Head of caudate nucleus (tissue), 42 donors: ENCODE measurements at regions of chr15 and their contacts with region 1.

Region 1: DNA sequence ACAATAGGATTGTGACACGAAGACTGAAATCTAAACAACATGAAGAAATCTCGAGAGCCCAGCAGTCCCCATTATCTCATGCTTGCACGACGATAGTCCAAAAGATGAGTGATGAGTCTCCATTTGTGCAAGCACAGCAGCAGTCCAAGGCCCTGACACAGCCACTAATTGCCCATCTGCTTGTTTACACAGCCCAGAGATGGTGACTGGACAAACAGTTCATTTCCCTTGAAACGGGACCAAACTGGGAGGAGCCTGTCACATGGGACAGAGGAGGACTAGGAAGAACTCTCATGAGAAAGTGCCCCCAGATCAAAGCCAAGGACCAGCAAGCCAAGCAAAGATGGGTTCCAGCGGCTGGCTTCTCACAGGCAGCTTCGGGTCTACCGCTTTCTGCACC is 121.0 kb downstream of the GREM1 start:
- DNase-seq: peak; percentile 38 to 93 (median 78)

Region 2: DNA sequence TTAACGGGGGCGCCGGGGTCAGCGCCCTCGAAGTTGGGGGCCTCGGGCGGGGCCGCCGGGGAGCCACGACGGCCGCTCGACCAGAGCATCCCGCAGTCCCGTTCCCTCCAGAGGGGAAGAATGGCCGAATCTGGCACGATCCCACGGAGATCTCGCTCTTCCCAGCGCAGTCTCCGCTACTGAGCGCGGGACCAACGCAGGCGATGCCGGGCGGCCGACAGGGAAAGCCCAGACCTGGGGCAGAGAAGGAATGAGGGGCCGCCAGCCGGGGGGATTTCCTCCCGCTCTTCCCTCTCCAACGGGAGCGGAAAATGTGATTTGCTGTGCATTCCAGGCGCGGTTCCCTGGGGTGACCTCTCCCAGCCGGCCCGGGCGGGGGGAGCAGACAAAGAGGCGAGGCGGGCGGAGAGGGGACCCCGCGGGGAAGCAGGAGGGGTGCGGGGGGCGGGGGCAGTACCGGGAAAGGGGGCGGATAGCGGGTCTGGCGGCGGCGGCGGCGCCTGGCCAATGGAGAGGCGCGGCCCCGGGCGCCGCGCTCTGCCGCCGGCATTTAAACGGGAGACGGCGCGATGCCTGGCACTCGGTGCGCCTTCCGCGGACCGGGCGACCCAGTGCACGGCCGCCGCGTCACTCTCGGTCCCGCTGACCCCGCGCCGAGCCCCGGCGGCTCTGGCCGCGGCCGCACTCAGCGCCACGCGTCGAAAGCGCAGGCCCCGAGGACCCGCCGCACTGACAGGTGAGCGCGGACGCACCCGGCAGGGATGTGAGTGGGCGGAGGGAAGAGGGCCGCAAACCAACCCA is 121.2 kb before region 1 on chr15 and contains the start of gene GREM1:
- intact Hi-C with region 1: loop called (anchors 2 kb)
- DNase-seq: peak in 40 of 42 donors; percentile 29 to 92 (median 70)

Region 3: GRCh38 chr15:32790352-32790999 is 48.3 kb before region 1 on chr15:
- intact Hi-C with region 1: no loop called
- DNase-seq: no peak

Region 4: GRCh38 chr15:33152502-33153109 is 313.8 kb after region 1 on chr15:
- intact Hi-C with region 1: no loop called
- DNase-seq: peak in 1 of 42 donors; percentile 26